Activated B cell treated with CpG ODN at 0.5 μM for 24 hours (primary cell): ENCODE measurements at regions of chr4 and their contacts with region 1.

Region 1: GRCh38 chr4:139177868-139178611 is 1.0 kb upstream of the ELF2 start:
- DNase-seq: peak; percentile 89
- ATAC-seq: peak; percentile 74
- H3K4me3 Mint-ChIP-seq: peak overlapping the region; percentile 93
- H3K27ac Mint-ChIP-seq: peak overlapping the region; percentile 92
- H3K4me1 Mint-ChIP-seq: peaks cover 25% of the 10 kb centered on the region
- H3K27me3 Mint-ChIP-seq: no peaks in the 10 kb centered on the region
- CTCF ChIP-seq: no peak

Region 2: DNA sequence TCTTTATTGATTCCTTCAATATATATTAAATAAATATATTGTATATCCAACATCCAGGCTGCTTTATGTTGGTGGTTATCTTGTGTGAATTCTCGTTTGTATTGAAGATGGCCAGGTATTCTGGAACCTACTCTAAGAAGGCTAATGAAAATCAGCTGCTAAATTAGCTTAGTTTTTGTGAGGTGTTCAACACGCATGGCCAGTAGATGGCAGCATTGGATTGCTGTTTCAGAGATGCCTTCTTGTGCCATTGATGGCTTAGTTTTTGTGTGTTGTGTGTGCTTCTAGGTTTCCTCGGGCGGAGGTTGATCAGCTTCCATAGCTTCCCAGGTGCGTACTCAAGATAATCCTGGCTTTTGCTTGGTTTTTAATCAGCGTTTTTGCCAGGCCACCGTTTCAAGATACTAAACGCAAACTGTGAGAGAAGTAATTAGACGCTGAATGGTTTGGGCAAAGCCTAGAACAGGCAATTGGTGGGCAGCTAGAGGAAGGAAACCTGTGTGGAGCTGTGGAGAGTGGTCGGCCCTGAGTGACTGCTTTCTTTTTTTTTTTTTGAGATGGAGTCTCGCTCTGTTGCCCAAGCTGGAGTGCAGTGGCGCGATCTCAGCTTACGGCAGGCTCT is 147.3 kb before region 1 on chr4:
- CTCF ChIA-PET with region 1: interaction called, 3 read pairs
- POLR2A ChIA-PET with region 1: no interaction called
- intact Hi-C with region 1: loop called (anchors 5 kb)
- DNase-seq: peak; percentile 34
- ATAC-seq: peak; percentile 75
- H3K4me3 Mint-ChIP-seq: peak overlapping the region; percentile 0
- H3K27ac Mint-ChIP-seq: no peak overlapping the region
- H3K4me1 Mint-ChIP-seq: peaks cover 32% of the 10 kb centered on the region
- H3K27me3 Mint-ChIP-seq: no peaks in the 10 kb centered on the region
- CTCF ChIP-seq: peak; percentile 60

Region 3: GRCh38 chr4:139099366-139099982 is 78.6 kb before region 1 on chr4:
- CTCF ChIA-PET with region 1: no interaction called
- POLR2A ChIA-PET with region 1: interaction called, 9 read pairs
- intact Hi-C with region 1: loop called (anchors 1 kb)
- DNase-seq: peak; percentile 28
- ATAC-seq: peak; percentile 90
- H3K4me3 Mint-ChIP-seq: no peak overlapping the region
- H3K27ac Mint-ChIP-seq: no peak overlapping the region
- H3K4me1 Mint-ChIP-seq: no peaks in the 10 kb centered on the region
- H3K27me3 Mint-ChIP-seq: no peaks in the 10 kb centered on the region
- CTCF ChIP-seq: no peak

Region 4: DNA sequence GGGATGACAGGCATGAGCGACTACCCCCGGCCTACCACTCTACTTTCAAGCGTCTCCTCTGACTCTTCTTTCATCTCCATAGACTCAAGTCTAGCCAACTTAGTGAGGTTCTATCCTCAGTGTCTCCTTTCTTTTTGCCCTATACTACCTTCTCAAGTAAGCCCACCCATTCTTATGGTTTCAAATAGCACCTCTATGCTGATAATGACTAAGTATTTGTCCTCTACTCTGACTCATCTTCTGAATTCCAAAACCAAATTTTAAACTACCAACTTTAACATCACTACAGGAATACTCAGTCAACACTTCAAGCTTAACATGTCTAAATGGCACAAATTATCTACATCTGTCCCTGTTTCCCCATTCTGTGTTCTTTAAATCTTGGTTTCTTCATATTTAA is 48.8 kb before region 1 on chr4:
- CTCF ChIA-PET with region 1: no interaction called
- POLR2A ChIA-PET with region 1: no interaction called
- intact Hi-C with region 1: no loop called
- DNase-seq: no peak
- ATAC-seq: no peak
- H3K4me3 Mint-ChIP-seq: no peak overlapping the region
- H3K27ac Mint-ChIP-seq: no peak overlapping the region
- H3K4me1 Mint-ChIP-seq: no peaks in the 10 kb centered on the region
- H3K27me3 Mint-ChIP-seq: no peaks in the 10 kb centered on the region
- CTCF ChIP-seq: no peak

Region 5: DNA sequence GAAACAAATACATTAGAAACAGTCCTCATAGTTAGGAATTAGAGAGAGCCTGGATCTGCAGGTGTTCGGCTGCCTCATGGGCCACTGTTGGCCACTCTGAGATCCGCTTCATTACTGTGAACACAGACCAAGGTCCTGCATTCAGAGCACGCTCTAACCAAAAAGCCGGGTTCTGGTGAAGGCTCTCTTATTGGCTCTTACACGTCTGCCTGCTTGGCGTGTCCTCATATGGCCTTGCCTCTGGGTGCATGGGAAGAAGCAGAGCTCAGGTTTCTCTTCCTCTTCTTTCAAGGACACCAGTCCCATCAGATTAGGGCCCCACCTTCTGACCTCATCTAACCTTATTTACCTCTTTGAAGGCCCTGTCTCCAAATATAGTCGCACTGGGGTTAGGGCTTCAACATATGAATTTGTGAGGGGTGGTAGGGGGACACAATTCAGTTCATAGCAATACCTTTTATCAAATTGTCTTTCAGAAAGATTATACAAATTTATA is 36.0 kb after region 1 on chr4:
- CTCF ChIA-PET with region 1: no interaction called
- POLR2A ChIA-PET with region 1: interaction called, 15 read pairs
- intact Hi-C with region 1: loop called (anchors 5 kb)
- DNase-seq: peak; percentile 21
- ATAC-seq: peak; percentile 99
- H3K4me3 Mint-ChIP-seq: peak overlapping the region; percentile 9
- H3K27ac Mint-ChIP-seq: peak overlapping the region; percentile 53
- H3K4me1 Mint-ChIP-seq: peaks cover 15% of the 10 kb centered on the region
- H3K27me3 Mint-ChIP-seq: no peaks in the 10 kb centered on the region
- CTCF ChIP-seq: no peak

Region 6: DNA sequence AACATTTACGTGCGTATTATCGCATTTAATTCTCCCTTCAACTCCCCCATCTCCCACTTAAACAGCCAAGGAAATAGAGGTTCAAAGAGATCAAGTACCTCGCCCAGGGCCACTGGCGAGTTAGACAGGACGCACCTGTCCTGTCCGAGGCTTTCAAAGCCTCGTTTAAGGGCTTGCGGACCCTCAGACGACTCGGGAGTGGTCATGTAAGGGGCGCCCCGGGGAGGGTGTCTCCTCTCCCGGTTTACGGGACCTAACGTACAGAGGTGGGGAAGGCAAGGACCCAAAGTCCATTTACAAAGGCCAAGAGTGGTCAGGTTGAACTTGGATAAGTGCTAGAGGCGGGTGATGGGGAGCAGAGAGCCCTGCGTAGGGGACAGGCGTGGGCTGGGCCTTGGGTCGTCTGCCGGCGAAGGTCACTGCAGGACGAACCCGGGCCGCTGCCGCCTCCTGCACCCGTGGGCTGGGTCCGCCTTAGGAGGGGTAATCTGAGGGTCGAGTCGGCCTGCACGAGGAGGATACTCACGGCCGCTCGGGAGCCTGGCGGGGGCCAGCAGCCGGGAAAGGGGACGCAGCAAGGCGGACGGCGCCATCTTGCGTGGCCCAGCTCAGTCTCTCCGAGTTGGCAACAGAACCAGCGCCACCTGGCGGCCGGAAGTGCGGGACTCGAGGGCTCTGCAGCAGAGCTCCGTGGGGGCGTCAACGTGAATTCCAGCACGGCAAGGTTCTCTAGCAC is 117.3 kb after region 1 on chr4:
- CTCF ChIA-PET with region 1: interaction called, 8 read pairs
- POLR2A ChIA-PET with region 1: interaction called, 74 read pairs
- intact Hi-C with region 1: loop called (anchors 1 kb)
- DNase-seq: peak; percentile 98
- ATAC-seq: peak; percentile 93
- H3K4me3 Mint-ChIP-seq: peak overlapping the region; percentile 97
- H3K27ac Mint-ChIP-seq: peak overlapping the region; percentile 98
- H3K4me1 Mint-ChIP-seq: peaks cover 15% of the 10 kb centered on the region
- H3K27me3 Mint-ChIP-seq: no peaks in the 10 kb centered on the region
- CTCF ChIP-seq: peak; percentile 90

Region 7: DNA sequence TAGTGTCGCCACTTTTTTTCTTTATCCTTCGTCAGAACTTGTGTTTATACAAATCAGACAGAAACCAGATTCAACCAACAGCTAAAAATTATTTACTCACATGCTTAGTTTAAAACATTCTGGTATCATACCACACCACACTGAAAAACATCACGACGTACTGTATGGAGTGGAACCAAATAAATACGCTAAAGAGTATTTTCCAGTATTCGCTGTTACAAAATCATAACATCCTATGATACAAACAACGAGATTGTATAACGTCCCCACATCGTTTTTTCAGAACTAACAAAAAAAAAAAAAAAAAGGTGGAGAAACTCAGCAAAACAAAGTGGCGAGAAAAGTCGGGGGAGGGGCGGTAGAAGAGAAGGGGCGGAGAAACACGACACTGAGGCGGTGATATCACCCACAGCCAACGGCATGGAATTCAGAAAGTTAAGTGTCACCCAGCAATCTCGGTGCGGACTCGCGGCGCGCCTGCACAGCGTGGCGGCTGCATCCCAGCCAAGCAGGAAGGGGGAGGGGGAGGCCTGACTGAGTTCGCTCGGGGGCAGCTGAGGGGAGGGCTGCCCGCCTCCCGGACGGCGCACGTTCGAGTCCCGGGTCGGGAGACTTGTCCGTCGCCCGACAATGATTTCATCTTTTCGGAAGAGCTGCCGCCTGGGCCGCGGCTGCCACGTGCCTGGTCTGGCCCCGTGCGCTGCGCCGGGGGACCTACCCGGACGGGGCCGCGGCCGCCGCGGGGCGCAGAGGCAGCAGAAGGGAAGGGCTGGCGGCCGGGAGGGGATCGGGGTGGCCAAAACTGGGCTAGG is 377.1 kb after region 1 on chr4:
- CTCF ChIA-PET with region 1: no interaction called
- POLR2A ChIA-PET with region 1: interaction called, 8 read pairs
- intact Hi-C with region 1: loop called (anchors 1 kb)
- DNase-seq: peak; percentile 71
- ATAC-seq: peak; percentile 60
- H3K4me3 Mint-ChIP-seq: peak overlapping the region; percentile 95
- H3K27ac Mint-ChIP-seq: peak overlapping the region; percentile 94
- H3K4me1 Mint-ChIP-seq: peaks cover 59% of the 10 kb centered on the region
- H3K27me3 Mint-ChIP-seq: no peaks in the 10 kb centered on the region
- CTCF ChIP-seq: no peak